Lower leg skin (tissue), 4 donors: ENCODE measurements at regions of chr7 and their contacts with region 1.

Region 1: DNA sequence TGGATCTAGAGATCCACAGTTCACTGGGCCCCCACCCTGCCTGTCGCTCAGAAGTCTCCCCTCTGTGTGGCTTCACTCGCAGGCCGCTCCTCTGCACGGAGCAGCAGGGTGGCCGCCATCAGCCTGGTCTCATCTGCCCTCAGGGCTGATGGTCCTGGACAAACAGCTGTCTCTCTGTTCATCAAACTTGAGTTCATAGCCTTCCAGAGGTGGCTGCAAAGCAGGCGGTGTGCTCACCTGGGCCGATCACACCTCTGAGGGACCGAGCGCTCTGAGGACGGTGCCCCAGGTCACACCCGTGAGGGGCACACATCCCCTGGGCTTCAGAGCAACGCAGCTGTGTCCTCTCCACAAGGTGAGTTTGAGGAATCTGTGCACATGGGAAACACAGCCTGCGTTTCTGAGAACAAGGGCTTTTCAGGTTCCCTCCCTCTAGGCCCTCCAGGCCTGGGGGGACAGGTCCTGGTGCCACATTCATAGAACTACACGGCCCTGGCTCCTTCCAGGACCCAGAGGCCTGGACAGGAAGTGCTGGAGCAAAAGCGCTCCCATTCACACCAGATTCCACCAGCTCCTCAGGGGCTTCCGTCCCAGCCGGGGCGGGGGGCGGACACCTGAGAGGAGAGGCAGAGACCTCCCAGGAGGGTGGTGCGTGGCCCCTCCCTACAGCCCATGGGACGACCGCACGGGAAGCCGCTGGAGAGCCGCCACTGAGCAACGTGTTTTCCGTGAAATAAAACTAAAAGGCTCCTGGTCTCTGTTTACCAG is 31.2 kb upstream of the FAM20C start:
- DNase-seq: no peak
- H3K4me3 ChIP-seq: no peak overlapping the region
- CTCF ChIP-seq: no peak
- POLR2A ChIP-seq: no peak

Region 2: GRCh38 chr7:149856-150636 is 11.1 kb before region 1 on chr7:
- intact Hi-C with region 1: loop called (anchors 1 kb)
- DNase-seq: peak; percentile 37 to 92
- H3K4me3 ChIP-seq: peak overlapping the region; percentile 23
- CTCF ChIP-seq: no peak
- POLR2A ChIP-seq: no peak

Region 3: GRCh38 chr7:405489-406211 is 244.5 kb after region 1 on chr7:
- intact Hi-C with region 1: no loop called
- DNase-seq: peak in 1 of 2 donors; percentile 72
- H3K4me3 ChIP-seq: no peak overlapping the region
- CTCF ChIP-seq: no peak
- POLR2A ChIP-seq: no peak